MCF 10A (cell line): ENCODE measurements at regions of chr11 and their contacts with region 1.

Region 1: GRCh38 chr11:70467201-70468085 is 69.1 kb downstream of the CTTN start:
- DNase-seq: peak; percentile 64
- H3K4me3 Mint-ChIP-seq: no peak overlapping the region
- H3K27ac Mint-ChIP-seq: no peak overlapping the region
- H3K4me1 Mint-ChIP-seq: no peaks in the 10 kb centered on the region
- H3K27me3 Mint-ChIP-seq: no peaks in the 10 kb centered on the region
- CTCF ChIP-seq: peak; percentile 83

Region 2: DNA sequence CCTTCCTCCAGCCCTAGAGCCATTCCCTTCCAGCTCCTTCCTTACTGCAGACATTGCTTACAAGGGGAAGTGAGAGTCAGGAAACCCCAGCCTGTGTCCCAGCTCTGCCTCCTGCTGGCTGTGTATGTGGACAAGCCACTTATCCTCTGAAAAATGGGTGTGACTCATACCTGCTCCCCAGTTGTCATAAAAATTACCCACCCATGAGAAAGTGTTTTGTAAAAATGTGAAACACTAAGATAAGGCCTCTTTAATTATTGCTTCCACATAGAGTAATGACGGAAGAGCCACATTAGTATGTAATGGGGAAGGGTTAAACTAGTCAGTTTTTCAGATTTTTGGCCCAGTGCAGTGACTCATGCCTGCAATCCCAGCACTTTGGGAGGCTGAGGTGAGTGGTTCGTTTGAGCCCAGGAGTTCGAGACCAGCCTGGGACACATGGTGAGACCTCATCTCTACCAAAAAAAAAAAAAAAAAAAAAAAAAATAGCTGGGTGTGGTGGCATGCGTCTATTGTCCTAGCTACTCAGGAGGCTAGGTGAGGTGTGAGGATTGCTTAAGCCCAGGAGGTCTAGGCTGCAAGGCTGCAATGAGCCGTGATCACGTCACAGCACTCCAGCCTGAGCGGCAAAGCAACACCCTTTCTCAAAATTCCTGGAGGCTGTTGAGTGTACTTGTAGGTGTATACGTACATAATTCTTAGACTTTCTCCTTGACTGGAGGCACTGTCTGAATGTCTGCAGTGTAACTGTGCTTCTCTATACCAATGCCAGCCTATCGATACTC is 15.8 kb after region 1 on chr11:
- CTCF ChIA-PET with region 1: interaction called, 27 read pairs
- POLR2A ChIA-PET with region 1: no interaction called
- intact Hi-C with region 1: no loop called
- DNase-seq: peak; percentile 69
- H3K4me3 Mint-ChIP-seq: no peak overlapping the region
- H3K27ac Mint-ChIP-seq: no peak overlapping the region
- H3K4me1 Mint-ChIP-seq: no peaks in the 10 kb centered on the region
- H3K27me3 Mint-ChIP-seq: no peaks in the 10 kb centered on the region
- CTCF ChIP-seq: peak; percentile 13

Region 3: DNA sequence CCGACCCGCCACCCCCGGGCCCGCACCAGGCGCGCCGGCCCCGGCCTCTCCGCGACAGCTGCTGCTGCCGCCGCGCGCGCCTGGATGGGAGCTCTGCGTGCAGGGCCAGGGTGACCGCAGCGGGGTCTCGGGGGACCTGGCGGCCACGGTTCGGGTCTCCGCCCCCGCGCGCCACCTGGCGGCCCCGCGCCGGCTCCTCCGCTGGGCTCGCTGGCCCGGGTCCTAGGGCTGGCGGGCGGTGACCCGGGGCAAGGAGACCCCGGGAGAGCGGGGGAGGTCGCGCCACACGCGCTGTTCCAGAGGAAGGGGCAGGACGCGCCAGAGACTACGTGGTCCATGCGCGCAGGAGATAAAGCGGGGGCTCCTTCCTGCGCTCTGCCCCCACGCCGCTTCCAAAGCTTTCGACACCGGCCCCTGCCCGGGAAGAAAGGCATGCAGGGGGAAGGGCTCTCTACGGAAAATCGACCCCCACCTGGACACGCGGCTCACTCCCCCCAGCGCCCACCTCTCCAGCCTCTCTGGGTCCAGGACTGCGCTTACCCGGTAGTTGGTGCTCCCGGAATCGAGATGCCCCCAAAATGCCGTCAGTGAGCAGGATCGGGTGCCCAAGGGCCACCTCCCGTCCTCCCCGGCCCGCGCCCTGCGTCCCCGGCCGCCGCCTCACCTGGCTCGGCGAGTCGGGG is 784.5 kb after region 1 on chr11:
- CTCF ChIA-PET with region 1: no interaction called
- POLR2A ChIA-PET with region 1: no interaction called
- intact Hi-C with region 1: loop called (anchors 5 kb)
- DNase-seq: no peak
- H3K4me3 Mint-ChIP-seq: peak overlapping the region; percentile 19
- H3K27ac Mint-ChIP-seq: no peak overlapping the region
- H3K4me1 Mint-ChIP-seq: no peaks in the 10 kb centered on the region
- H3K27me3 Mint-ChIP-seq: peaks cover 25% of the 10 kb centered on the region
- CTCF ChIP-seq: peak; percentile 56

Region 4: DNA sequence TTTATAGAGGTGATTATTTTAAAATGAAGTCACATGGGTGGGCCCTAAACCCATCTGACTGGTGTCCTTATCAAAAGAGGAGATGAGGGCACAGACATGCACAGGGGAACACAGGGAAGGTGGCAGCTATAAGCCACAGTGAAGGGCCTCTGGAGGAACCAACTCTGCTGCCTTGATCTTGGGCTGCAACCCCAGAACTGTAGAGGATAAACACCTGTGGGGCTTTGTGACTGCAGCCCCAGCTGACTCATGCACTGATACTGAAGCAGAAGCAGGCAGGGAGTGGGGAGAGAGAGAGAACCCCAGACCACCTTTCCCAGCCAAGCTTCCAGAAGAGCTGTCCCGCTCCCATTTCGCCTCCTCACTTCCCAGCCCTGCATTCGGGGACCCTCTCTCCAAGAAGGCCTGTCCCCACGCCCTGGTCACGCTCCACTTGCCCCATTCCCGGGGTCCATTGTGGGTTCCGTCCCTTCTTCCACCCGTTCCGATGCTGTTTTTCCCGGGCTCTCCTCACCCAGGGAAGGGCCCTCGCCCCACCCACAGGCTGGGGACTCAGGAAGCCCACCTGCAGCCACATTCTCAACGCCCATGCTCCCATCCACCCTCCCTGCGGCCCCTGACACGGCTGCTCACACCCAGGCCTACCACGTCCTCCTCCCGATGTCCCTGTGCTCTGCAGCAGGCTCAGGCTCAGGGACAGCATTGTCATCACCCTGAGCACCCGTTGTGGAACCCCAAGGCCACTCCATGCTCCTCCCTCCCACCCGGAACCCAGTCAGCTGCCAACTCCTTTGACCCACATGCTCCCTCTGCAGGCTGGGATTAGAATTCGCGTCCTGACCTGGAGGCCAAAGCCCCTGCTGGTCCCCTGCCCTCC is 875.7 kb after region 1 on chr11:
- CTCF ChIA-PET with region 1: no interaction called
- POLR2A ChIA-PET with region 1: no interaction called
- intact Hi-C with region 1: loop called (anchors 1 kb)
- DNase-seq: peak; percentile 46
- H3K4me3 Mint-ChIP-seq: no peak overlapping the region
- H3K27ac Mint-ChIP-seq: no peak overlapping the region
- H3K4me1 Mint-ChIP-seq: no peaks in the 10 kb centered on the region
- H3K27me3 Mint-ChIP-seq: peaks cover 21% of the 10 kb centered on the region
- CTCF ChIP-seq: peak; percentile 37

Region 5: DNA sequence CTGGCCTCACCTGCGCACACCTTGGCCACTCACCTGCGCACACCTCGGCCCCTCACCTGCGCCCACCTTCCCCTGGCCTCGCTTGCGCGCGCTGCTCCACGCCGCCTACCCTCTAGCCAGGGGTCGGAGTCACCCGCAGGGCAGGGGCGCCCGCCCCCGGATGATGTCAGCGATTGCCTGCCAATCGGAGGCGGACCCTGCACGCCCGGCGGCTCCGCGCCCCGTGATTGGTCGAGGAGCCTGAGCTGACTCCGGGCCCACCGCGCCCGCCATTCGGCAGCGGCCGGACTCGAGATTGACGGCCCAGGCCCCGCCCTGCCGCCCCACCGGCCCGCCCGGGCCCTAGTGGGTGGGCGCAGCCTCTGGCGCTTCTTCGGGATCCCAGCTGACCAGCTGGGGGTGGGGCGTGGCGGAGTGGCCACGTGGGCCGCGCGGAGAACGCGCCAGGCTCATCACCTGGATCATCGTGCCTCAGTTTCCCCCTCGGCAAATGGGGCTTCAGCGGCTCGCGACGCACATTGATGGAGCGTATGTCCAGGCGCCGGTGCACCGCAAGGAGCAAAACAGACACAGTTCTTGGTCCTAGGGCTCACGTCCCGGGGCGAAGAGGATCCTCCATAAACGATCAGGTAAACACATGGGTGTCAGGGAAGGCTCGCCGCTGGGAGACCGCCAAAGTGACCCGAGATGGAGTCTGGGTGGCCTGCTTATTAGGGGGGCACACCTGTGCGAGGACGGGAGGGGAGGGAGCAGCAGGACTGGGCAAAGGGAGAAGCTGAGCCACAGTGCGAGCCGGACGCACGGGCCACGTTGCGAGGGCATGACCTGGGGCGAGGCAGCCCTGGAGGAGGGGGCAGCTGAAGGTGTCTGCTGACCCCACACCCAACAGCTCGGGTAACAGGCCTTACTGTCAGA is 981.1 kb after region 1 on chr11 and contains the start of gene DHCR7:
- CTCF ChIA-PET with region 1: no interaction called
- POLR2A ChIA-PET with region 1: no interaction called
- intact Hi-C with region 1: loop called (anchors 10 kb)
- DNase-seq: peak; percentile 90
- H3K4me3 Mint-ChIP-seq: peak within 1 kb of the TSS; percentile 94
- H3K27ac Mint-ChIP-seq: peak within 1 kb of the TSS; percentile 76
- H3K4me1 Mint-ChIP-seq: peaks cover 42% of the 10 kb centered on the region
- H3K27me3 Mint-ChIP-seq: no peaks in the 10 kb centered on the region
- CTCF ChIP-seq: no peak
- total RNA-seq, gene DHCR7: 48.2 and 72.6 TPM in 2 replicates